ENCODE measurements at regions of chr9 and their contacts with region 1.

Region 1: DNA sequence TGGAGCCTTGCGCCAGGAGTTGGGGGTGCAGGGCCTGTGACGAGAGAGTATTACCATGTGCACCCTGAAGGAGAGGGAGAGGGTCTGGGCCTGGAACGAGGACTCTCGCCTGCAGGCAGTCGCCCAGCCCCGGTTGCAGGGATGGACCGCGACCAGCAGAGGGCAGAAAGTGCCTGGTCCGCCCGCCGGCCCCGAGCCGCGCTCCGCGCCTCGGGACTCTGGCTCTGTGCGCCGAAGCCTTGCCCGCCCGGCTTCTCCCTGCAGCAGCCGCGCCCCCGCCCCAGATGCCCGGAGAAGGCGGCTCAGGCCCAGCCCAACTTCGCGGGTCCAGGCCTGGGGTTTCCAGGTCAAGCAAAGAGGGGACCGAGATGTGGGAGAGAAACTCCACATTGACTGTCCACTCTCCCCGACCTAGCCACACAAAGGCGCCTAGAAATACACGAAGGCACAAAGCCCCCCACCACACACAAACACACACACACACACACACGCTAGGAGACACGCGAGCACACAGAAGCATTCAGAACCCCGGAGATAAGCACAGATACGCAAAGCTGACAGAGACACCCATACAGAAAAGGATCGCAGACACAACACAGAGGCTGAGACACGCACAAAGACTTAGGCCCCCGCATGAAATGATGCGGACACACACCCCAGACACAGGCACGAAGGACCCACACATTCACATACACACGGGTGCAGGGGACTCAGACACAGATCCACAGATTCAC is 2.0 kb upstream of the LMX1B start:
- DNase-seq: peak; percentile 70 to 91
- H3K4me3 ChIP-seq: peak overlapping the region; percentile 23
- H3K4me1 ChIP-seq: peaks cover 8% of the 10 kb centered on the region
- H3K27me3 ChIP-seq: no peaks in the 10 kb centered on the region

Region 2: GRCh38 chr9:126690431-126691350 is 78.9 kb after region 1 on chr9:
- in situ Hi-C with region 1: loop called (anchors 5 kb)
- DNase-seq: peak; percentile 18 to 86
- H3K4me3 ChIP-seq: no peak overlapping the region
- H3K4me1 ChIP-seq: no peaks in the 10 kb centered on the region
- H3K27me3 ChIP-seq: no peaks in the 10 kb centered on the region

Region 3: GRCh38 chr9:126756876-126757415 is 145.2 kb after region 1 on chr9:
- in situ Hi-C with region 1: no loop called
- DNase-seq: peak in 1 of 2 experiments; percentile 21
- H3K4me3 ChIP-seq: no peak overlapping the region
- H3K4me1 ChIP-seq: no peaks in the 10 kb centered on the region
- H3K27me3 ChIP-seq: no peaks in the 10 kb centered on the region